Activated B cell treated with CpG ODN at 0.5 μM for 24 hours (primary cell): ENCODE measurements at regions of chr13 and their contacts with region 1.

Region 1: DNA sequence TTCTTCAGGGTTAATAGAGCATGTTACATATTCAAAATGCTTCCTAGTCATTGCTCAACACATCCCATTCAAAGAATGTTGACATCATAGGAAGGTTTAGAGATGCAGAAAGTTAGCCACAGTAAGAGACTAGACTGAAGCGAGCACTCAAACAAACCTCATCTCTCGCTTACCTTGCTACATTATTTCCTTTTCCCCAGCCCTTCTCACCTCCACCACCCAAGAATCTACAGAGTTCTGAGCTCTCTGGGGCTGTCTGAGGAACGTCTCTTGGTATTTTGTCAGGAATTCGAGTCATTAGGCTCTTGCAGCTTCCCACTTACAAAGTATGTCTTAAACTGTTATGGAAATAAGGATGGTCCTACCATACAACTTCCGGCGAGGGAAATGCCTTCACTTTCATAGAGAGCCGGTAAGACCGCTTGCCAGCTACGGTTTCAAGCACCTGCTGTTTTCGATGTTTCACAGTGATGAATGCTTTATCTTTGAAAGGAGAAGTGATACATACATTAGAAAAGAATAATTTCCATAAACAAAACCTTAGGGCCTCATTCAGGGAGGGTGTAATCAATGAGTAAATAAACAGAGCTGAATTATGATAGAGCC is 65.1 kb downstream of the FLT1 start:
- DNase-seq: peak; percentile 19
- ATAC-seq: peak; percentile 92
- H3K4me3 Mint-ChIP-seq: peak overlapping the region; percentile 86
- H3K27ac Mint-ChIP-seq: peak overlapping the region; percentile 97
- H3K4me1 Mint-ChIP-seq: peaks cover 36% of the 10 kb centered on the region
- H3K27me3 Mint-ChIP-seq: peaks cover under 1% of the 10 kb centered on the region
- CTCF ChIP-seq: no peak

Region 2: GRCh38 chr13:28268800-28269223 is 161.0 kb before region 1 on chr13:
- CTCF ChIA-PET with region 1: no interaction called
- POLR2A ChIA-PET with region 1: no interaction called
- intact Hi-C with region 1: loop called (anchors 1 kb)
- DNase-seq: no peak
- ATAC-seq: peak; percentile 87
- H3K4me3 Mint-ChIP-seq: peak overlapping the region; percentile 41
- H3K27ac Mint-ChIP-seq: peak overlapping the region; percentile 78
- H3K4me1 Mint-ChIP-seq: peaks cover 29% of the 10 kb centered on the region
- H3K27me3 Mint-ChIP-seq: no peaks in the 10 kb centered on the region
- CTCF ChIP-seq: no peak

Region 3: GRCh38 chr13:28347456-28348371 is 82.1 kb before region 1 on chr13:
- CTCF ChIA-PET with region 1: no interaction called
- POLR2A ChIA-PET with region 1: no interaction called
- intact Hi-C with region 1: no loop called
- DNase-seq: no peak
- ATAC-seq: no peak
- H3K4me3 Mint-ChIP-seq: no peak overlapping the region
- H3K27ac Mint-ChIP-seq: no peak overlapping the region
- H3K4me1 Mint-ChIP-seq: peaks cover 2% of the 10 kb centered on the region
- H3K27me3 Mint-ChIP-seq: peaks cover 3% of the 10 kb centered on the region
- CTCF ChIP-seq: no peak

Region 4: GRCh38 chr13:28408235-28408848 is 21.4 kb before region 1 on chr13:
- CTCF ChIA-PET with region 1: no interaction called
- POLR2A ChIA-PET with region 1: no interaction called
- intact Hi-C with region 1: no loop called
- DNase-seq: no peak
- ATAC-seq: no peak
- H3K4me3 Mint-ChIP-seq: no peak overlapping the region
- H3K27ac Mint-ChIP-seq: no peak overlapping the region
- H3K4me1 Mint-ChIP-seq: peaks cover 19% of the 10 kb centered on the region
- H3K27me3 Mint-ChIP-seq: no peaks in the 10 kb centered on the region
- CTCF ChIP-seq: no peak

Region 5: DNA sequence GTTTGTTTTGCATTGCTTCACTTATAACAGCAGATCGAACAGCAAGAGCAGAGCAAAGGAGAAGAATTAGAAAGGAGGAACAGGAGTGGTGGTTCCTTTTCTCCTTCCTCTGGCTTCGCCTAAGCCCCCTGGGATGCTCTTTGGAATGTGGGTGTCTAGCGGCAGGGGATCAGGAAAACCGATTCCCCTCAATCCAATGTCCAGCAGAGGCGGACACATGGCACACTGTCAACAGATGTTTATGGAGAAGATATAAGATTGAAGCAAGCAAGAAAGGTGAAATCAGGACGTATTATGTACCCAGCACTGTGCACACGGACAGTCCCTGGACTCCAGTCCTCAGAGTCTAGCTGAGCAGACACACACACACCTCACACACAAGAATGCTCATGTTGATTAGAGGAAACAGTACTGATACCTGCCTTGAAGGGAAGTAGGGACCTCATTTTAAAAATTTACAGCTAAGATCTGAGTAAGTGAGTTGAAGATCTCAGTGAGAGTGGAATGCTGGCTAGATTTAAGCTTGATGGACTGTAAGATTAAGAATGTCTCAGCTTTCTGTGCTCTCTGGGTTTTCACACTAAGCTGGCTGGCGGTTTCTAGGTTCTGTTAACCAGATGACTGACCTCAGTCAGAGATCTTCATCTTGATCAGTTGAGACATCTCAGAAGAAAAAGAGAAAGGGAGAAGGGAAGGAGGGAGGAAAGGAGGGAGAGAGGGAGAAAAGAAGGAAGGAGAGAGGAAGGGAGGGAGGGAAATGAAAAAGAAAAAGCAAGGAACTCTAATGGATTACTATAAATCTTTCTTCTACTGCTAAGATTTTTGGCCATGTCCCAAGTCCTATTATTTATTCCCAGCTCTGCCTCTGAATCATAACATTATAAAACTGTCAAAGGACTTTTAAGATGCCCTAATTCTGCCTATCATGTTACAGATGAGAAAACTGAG is 20.3 kb after region 1 on chr13:
- CTCF ChIA-PET with region 1: no interaction called
- POLR2A ChIA-PET with region 1: no interaction called
- intact Hi-C with region 1: no loop called
- DNase-seq: no peak
- ATAC-seq: no peak
- H3K4me3 Mint-ChIP-seq: no peak overlapping the region
- H3K27ac Mint-ChIP-seq: no peak overlapping the region
- H3K4me1 Mint-ChIP-seq: no peaks in the 10 kb centered on the region
- H3K27me3 Mint-ChIP-seq: peaks cover 8% of the 10 kb centered on the region
- CTCF ChIP-seq: no peak

Region 6: DNA sequence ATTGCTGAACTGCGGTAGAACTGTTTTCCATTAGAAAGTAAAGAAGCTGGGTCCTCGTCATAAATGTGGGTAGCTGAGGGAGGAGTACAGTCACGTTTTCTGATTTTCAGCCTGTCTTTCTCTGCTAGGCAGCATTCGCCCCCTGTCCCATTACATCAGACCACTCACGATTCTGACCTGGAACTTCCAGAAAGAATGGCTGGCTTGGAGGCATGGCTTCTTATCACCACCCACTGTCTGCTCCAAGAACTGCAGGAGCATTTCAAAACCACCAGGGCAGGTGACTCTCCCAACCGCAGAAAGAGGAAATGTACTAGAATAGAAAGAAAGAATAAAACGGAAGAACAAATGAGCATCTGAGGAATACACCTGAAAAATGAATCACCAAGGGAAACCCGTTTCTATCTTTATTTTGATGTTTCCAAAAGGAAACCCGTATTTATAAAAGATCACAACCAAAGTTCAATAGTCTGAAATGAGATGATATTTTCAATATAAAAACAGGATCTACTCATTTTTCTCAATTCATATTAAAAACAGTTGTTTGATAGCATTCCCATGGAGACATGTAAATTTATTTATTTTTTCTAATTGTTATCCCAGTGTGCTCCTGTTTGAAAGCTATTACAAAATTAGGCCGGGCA is 207.0 kb after region 1 on chr13:
- CTCF ChIA-PET with region 1: no interaction called
- POLR2A ChIA-PET with region 1: no interaction called
- intact Hi-C with region 1: loop called (anchors 5 kb)
- DNase-seq: no peak
- ATAC-seq: peak; percentile 74
- H3K4me3 Mint-ChIP-seq: peak overlapping the region; percentile 66
- H3K27ac Mint-ChIP-seq: peak overlapping the region; percentile 74
- H3K4me1 Mint-ChIP-seq: peaks cover 36% of the 10 kb centered on the region
- H3K27me3 Mint-ChIP-seq: no peaks in the 10 kb centered on the region
- CTCF ChIP-seq: no peak

Region 7: GRCh38 chr13:28718543-28719226 is 288.9 kb after region 1 on chr13 and contains the start of gene SLC46A3:
- CTCF ChIA-PET with region 1: no interaction called
- POLR2A ChIA-PET with region 1: no interaction called
- intact Hi-C with region 1: loop called (anchors 5 kb)
- DNase-seq: peak; percentile 95
- ATAC-seq: peak; percentile 98
- H3K4me3 Mint-ChIP-seq: peak within 1 kb of the TSS; percentile 92
- H3K27ac Mint-ChIP-seq: peak within 1 kb of the TSS; percentile 92
- H3K4me1 Mint-ChIP-seq: peaks cover 23% of the 10 kb centered on the region
- H3K27me3 Mint-ChIP-seq: no peaks in the 10 kb centered on the region
- CTCF ChIP-seq: no peak
- total RNA-seq, gene SLC46A3: 8.6 and 11.8 TPM in 2 replicates

Region 8: DNA sequence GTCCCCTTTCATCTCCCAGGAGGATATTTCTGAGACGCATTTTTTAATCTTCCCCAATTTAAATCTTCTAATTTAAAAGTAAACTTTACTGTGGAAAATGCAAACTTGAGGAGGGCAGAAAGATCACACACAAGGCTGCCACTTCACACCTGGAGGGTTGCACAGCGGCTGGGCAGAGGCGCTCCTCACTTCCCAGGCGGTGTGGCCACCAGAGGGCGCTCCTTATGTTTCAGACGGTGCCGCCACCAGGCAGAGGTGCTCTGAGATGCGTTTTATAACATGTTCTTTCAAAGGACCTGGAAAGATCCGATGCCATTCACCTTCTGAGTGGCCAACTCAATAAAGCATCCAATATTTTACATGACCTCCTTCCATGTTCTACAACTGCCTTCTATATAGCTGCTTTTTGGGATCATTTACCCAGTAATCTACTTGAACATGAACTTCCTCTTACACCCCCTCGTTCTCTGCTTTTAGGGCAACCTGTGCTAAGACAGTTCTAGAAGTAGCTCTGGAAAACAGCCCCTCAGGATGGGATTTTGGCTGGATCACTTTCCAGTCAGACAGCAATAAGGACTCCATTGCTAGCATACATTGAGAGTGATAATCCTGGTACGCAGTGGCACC is 375.5 kb after region 1 on chr13:
- CTCF ChIA-PET with region 1: no interaction called
- POLR2A ChIA-PET with region 1: no interaction called
- intact Hi-C with region 1: no loop called
- DNase-seq: no peak
- ATAC-seq: no peak
- H3K4me3 Mint-ChIP-seq: no peak overlapping the region
- H3K27ac Mint-ChIP-seq: no peak overlapping the region
- H3K4me1 Mint-ChIP-seq: no peaks in the 10 kb centered on the region
- H3K27me3 Mint-ChIP-seq: peaks cover 23% of the 10 kb centered on the region
- CTCF ChIP-seq: no peak